Ascending aorta (tissue), 2 donors: ENCODE measurements at regions of chr2 and their contacts with region 1.

Region 1: GRCh38 chr2:218229239-218229638 is 12.2 kb downstream of the ARPC2 start:
- DNase-seq: peak in 1 of 2 donors; percentile 67
- H3K4me3 ChIP-seq: peak overlapping the region in 1 of 2 donors; percentile 3
- H3K27ac ChIP-seq: peak overlapping the region; percentile 84 to 91
- H3K4me1 ChIP-seq: peaks cover 15 to 39% of the 10 kb centered on the region in 2 donors
- H3K27me3 ChIP-seq: no peaks in the 10 kb centered on the region
- CTCF ChIP-seq: no peak

Region 2: GRCh38 chr2:218216674-218217359 is 12.4 kb before region 1 on chr2 and contains the start of gene ARPC2:
- intact Hi-C with region 1: loop called (anchors 1 kb)
- DNase-seq: peak; percentile 75 to 97
- H3K4me3 ChIP-seq: peak within 1 kb of the TSS; percentile 96
- H3K27ac ChIP-seq: peak within 1 kb of the TSS; percentile 97 to 98
- H3K4me1 ChIP-seq: peaks cover 19 to 35% of the 10 kb centered on the region in 2 donors
- H3K27me3 ChIP-seq: no peaks in the 10 kb centered on the region
- CTCF ChIP-seq: peak in 1 of 3 experiments; percentile 22
- total RNA-seq, gene ARPC2: 237 TPM